ENCODE measurements at regions of chr15 and their contacts with region 1.

Region 1: DNA sequence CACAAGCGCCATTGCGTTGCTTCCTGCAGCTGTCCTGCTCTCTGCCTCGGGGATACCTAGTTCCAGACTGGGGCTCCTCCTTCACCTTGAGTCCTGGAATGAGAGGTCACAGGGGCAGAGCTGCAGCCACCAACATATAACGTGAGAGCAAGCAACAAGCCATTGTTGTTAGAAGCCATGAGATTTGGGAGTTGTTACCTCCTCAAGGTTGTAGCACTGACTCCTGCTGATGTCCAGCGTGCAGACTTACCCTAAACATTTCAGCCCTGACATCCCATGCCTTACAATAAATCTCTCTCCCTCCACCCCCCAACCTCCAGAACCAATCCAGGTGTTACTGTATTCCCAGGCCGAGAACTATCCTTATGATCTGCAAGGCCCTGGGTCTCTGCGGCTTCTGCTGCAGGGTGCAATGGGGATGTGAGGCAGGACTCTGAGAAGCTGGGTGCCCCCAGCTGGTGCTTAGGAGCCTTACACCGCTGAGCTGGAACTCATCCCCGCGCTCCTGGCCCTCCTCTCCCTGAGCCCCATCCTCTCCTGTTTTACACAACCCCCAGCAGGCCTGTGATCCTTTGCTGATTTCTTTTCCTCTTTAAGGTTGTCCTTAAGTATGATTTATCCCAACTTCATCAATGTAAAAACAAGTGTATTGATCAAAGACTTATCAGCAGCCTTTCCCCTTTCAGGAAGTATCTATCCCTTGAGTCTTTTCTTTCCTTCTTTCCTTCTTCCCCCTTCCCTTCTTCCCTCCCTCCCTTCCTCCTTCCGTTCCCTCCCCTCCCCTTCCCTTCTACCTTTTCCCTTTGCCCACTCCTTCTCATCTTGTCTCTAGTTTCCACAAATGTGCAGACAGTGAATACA is 84.2 kb upstream of the ABHD2 start:
- DNase-seq: no peak
- H3K4me3 ChIP-seq: no peak overlapping the region
- H3K27ac ChIP-seq: no peak overlapping the region; the same call in 1 of the 2 replicates
- H3K4me1 ChIP-seq: peaks cover 16 to 35% (median 20%) of the 10 kb centered on the region in 4 experiments
- H3K27me3 ChIP-seq: no peaks in the 10 kb centered on the region
- CTCF ChIP-seq: peak; percentile 71 to 79 (median 74)
- EP300 ChIP-seq: no peak
- POLR2A ChIP-seq: no peak
- RAD21 ChIP-seq: peak; percentile 82 to 87

Region 2: GRCh38 chr15:88989578-88989977 is 14.5 kb before region 1 on chr15:
- CTCF ChIA-PET with region 1: interaction called, 39 read pairs
- POLR2A ChIA-PET with region 1: interaction called, 145 read pairs
- DNase-seq: no peak
- H3K4me3 ChIP-seq: no peak overlapping the region
- H3K27ac ChIP-seq: no peak overlapping the region
- H3K4me1 ChIP-seq: peaks cover 17 to 43% (median 38%) of the 10 kb centered on the region in 4 experiments
- H3K27me3 ChIP-seq: no peaks in the 10 kb centered on the region
- CTCF ChIP-seq: no peak
- EP300 ChIP-seq: no peak
- POLR2A ChIP-seq: no peak
- RAD21 ChIP-seq: no peak

Region 3: DNA sequence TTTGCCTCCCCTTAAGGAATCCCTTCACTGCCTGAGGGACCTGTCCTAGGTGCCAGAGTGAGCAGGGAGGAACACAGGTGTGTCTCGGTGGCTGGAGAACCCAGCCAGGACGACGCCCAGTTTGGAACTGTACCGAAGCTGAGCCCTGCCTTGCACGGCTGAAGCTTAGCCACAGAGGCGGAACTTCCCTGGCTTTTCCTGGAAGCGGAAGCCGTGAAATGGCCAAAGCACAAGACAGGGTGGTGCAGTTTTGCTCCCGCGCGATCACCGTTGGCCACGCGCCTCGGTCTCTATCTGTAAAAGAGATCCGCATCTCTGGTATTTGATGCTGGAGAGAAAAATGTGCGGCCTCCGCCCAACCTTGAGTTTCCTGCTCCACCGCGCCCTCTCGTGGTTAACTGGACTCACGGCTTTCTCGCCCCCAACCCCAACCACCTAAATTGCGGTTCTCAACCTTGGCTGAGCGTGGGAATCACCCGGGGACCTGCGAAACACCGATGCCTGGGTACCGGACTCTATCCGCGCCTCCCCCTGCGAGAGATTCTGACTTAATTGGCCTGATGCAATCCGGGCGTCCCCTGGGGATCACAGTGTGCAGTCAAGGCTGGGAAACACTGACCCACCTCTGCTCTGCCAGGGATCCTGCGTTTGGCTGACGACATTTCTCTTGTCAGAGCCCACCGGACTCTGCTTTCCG is 13.4 kb after region 1 on chr15:
- CTCF ChIA-PET with region 1: interaction called, 20 read pairs
- POLR2A ChIA-PET with region 1: interaction called, 7 read pairs
- DNase-seq: peak; percentile 65 to 98
- H3K4me3 ChIP-seq: peak overlapping the region in 1 of 4 experiments; percentile 30; a peak in 3 of 8 replicates
- H3K27ac ChIP-seq: no peak overlapping the region
- H3K4me1 ChIP-seq: peaks cover 2 to 12% (median 3%) of the 10 kb centered on the region in 4 experiments; a peak in 5 of 7 replicates
- H3K27me3 ChIP-seq: no peaks in the 10 kb centered on the region; a peak in 1 of 7 replicates
- CTCF ChIP-seq: peak; percentile 84 to 95 (median 95)
- EP300 ChIP-seq: no peak
- POLR2A ChIP-seq: no peak
- RAD21 ChIP-seq: peak; percentile 82 to 92

Region 4: DNA sequence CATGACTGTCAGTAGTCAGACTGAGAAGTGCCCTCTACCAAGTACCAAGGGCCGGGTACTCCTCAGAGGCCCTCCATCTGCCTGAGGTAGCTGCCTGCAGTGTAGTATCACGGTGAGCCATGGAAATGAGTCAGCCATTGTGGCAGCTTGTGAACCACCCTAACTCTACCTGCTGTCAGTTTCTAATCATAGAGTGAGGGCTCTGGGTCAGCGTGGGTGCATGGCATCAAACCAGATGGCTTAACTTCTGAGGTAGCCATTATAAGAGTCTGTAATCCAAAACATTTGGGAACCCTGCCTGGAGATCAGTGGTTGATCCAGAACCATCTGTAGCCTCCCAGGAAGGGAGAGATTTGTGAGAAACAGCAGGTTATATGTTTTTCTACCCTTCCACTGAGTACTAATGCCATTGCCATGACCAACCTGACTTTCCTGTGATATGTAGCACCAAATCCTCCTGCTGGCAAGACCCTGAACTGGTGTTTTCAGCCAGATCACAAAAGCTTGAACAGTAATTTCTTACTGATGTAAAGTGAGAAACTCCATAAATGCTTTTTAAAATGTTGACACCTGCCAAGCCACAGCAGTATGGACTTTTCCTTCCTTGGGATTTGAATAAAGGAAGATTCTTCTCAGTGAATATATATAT is 123.1 kb after region 1 on chr15:
- CTCF ChIA-PET with region 1: no interaction called
- POLR2A ChIA-PET with region 1: no interaction called
- DNase-seq: no peak
- H3K4me3 ChIP-seq: no peak overlapping the region
- H3K27ac ChIP-seq: no peak overlapping the region
- H3K4me1 ChIP-seq: peaks cover 2 to 9% (median 4%) of the 10 kb centered on the region in 4 experiments; a peak in 3 of 7 replicates
- H3K27me3 ChIP-seq: no peaks in the 10 kb centered on the region
- CTCF ChIP-seq: peak in 2 of 3 experiments; percentile 23 to 28; a peak in 2 of 4 replicates
- EP300 ChIP-seq: no peak
- POLR2A ChIP-seq: no peak
- RAD21 ChIP-seq: peak; percentile 32 to 35; a peak in 2 of 4 replicates

Region 5: GRCh38 chr15:90059208-90059985 is 1055.3 kb after region 1 on chr15:
- CTCF ChIA-PET with region 1: no interaction called
- POLR2A ChIA-PET with region 1: no interaction called
- DNase-seq: peak in 1 of 2 experiments; percentile 64
- H3K4me3 ChIP-seq: peak overlapping the region in 1 of 4 experiments; percentile 19; a peak in 1 of 8 replicates
- H3K27ac ChIP-seq: peak overlapping the region; percentile 69
- H3K4me1 ChIP-seq: peaks cover 8 to 50% (median 36%) of the 10 kb centered on the region in 4 experiments
- H3K27me3 ChIP-seq: no peaks in the 10 kb centered on the region
- CTCF ChIP-seq: no peak
- EP300 ChIP-seq: no peak; a peak in 1 of 3 replicates
- POLR2A ChIP-seq: peak in 1 of 2 experiments; percentile 30; a peak in 1 of 3 replicates
- RAD21 ChIP-seq: peak in 1 of 2 experiments; percentile 8; a peak in 1 of 4 replicates

Measured in H1 (cell line).